HEK293 (cell line): ENCODE measurements at regions of chr12 and their contacts with region 1.

Region 1: DNA sequence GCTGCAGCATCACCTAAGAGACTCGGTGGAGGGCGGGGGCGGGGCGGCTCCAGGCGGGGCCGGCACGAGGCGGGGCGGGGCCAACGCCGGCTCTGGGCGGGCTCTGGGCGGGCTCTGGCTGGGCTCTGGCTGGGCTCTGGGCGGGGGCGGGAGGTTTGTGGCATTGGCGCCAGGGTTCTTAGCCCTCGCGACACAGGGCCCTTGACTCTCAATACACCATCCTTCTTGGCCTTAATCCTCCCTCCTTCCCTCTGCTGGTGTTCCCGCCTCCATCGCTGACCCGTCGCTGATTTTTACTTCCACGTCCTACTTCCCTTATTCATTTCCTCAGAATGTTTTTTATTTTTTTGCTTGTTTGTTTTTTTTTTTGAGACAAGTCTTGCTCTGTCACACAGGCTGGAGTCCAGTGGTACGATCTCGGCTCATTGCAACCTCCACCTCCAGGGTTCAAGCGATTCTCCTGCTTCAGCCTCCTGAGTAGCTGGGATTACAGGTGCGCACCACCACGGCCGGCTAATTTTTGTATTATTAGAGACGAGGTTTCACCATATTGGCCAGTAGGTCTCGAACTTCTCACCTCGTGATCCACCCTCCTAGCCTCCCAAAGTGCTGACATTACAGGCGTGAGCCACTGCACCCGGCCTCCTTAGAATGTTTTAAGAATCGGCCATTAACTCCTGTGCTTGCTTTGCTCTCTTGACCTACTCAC is at the start of gene BLTP3B:
- H3K4me3 ChIP-seq: peak within 1 kb of the TSS; percentile 91
- H3K27ac ChIP-seq: peak within 1 kb of the TSS; percentile 89
- H3K4me1 ChIP-seq: peaks cover 5% of the 10 kb centered on the region; the same call in 1 of the 2 replicates
- CTCF ChIP-seq: no peak

Region 2: GRCh38 chr12:100154474-100155247 is 11.7 kb after region 1 on chr12:
- CTCF ChIA-PET with region 1: interaction called, 36 read pairs
- POLR2A ChIA-PET with region 1: no interaction called
- H3K4me3 ChIP-seq: no peak overlapping the region
- H3K27ac ChIP-seq: no peak overlapping the region
- H3K4me1 ChIP-seq: no peaks in the 10 kb centered on the region
- CTCF ChIP-seq: peak; percentile 70

Region 3: GRCh38 chr12:100672075-100672592 is 529.1 kb after region 1 on chr12:
- CTCF ChIA-PET with region 1: no interaction called
- POLR2A ChIA-PET with region 1: no interaction called
- H3K4me3 ChIP-seq: no peak overlapping the region
- H3K27ac ChIP-seq: no peak overlapping the region
- H3K4me1 ChIP-seq: no peaks in the 10 kb centered on the region
- CTCF ChIP-seq: no peak; the same call in 1 of the 2 replicates